ENCODE measurements at regions of chr6 and their contacts with region 1.

Region 1: DNA sequence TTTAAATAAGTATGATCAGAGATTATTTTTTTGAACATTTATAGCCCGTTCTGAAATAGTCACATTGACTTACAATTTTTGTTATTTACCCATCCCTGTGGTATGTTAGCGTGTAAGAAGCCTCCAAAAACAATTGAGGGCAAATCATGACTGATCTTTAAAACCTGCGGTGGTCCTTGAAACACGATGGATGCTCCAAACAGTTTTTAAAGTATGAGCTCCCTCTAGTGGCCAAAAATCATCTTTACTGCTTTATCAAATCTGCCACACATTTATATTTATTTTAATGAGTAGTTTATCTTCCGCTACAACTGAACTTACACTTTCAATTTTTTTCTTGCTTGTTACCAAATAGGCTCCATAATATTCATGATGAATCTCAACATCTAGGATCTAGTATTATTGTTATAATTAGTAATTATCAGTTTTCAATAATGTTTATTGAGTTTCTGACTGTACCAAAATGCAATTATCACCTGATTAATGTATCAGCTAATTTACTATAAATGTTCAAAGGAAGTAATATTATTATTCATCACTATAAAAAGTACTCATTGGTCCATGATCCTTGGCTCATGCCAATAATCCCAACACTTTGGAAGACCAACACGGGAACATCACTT is 52.2 kb downstream of the MARCKS start:
- DNase-seq: peak; percentile 32 to 47
- ATAC-seq: peak in 1 of 2 experiments; percentile 51; a peak in 1 of 6 replicates
- H3K4me3 ChIP-seq: no peak overlapping the region
- H3K27ac ChIP-seq: no peak overlapping the region
- H3K4me1 ChIP-seq: no peaks in the 10 kb centered on the region
- CTCF ChIP-seq: peak; percentile 75
- EP300 ChIP-seq: no peak
- POLR2A ChIP-seq: no peak
- RAD21 ChIP-seq: peak; percentile 72 to 83

Region 2: DNA sequence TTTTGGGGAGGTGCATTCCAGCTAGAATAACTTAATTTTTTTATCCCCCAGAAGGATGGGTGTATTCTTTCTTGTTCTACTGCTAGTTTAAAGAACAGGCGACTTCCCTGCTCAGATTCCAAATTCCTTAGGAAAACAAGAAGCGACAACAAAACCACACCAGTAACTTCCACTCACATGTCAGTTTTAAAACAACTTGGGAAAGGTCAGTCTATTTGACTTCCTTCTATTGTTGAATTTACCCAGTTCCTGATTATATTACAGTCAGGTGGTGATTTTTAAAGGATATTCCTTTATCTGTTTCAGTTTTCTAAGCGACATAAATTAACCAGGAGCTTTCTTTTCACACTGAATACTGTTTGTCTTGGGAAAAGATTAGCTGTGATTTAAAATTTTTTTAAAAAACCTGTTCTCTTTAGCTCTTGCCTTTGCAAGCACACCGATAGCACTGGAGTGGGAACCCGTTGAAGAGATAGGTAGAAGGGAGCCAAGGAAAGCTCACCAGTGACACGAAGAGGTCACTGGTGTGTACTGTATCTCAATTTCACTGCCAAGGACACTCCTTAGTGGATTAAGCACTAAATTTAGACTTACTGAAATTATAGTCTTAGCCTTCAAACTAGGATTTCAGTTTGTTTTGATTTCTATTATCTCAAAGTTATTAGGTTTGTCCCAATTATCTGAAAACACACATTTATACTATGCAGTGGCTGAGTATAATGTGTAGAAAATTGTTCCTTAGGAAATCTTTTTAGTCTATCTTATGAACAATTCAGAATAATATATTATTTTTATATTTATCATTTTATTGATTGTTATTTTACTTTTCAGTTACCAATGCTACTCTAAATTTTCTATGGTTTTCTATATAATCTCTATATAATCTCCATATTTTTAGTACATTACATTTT is 29.9 kb before region 1 on chr6:
- CTCF ChIA-PET with region 1: interaction called, 13 read pairs
- POLR2A ChIA-PET with region 1: no interaction called
- DNase-seq: peak; percentile 48 to 73
- ATAC-seq: peak; percentile 99
- H3K4me3 ChIP-seq: no peak overlapping the region
- H3K27ac ChIP-seq: peak overlapping the region; percentile 39 to 48; a peak in 3 of 6 replicates
- H3K4me1 ChIP-seq: peaks cover 30% of the 10 kb centered on the region; the same call in 2 of the 3 replicates
- CTCF ChIP-seq: peak; percentile 69
- EP300 ChIP-seq: no peak
- POLR2A ChIP-seq: no peak
- RAD21 ChIP-seq: peak; percentile 84

Region 3: DNA sequence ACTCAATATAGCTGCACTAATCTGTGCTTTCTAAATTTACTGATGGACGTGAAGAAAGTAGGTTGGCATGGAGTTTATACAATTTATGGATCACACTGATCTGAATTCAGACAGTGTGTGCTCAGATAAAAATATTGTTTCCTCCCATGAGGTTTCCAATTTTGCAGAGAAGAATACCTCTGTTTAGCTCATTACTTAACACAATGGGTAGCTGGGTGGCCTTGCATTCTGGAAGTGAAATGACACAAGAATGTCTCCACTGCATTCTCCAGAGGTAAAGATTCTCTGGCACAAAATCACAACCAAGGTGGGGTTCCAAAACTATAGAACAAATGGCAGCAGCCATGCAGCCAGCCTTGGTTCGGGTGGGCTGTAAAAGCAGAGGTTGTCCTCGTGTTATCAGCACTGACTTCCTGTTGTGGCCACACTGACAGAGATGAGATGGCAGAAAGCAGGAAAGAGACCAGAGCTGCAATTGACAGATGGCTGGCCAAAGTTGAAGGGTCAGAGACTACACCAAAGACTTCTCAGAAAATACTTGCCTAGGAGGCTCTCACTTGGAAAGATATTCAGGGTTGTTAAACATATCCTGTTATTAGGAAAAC is 11.4 kb after region 1 on chr6:
- CTCF ChIA-PET with region 1: interaction called, 10 read pairs
- POLR2A ChIA-PET with region 1: no interaction called
- DNase-seq: no peak
- ATAC-seq: no peak
- H3K4me3 ChIP-seq: no peak overlapping the region
- H3K27ac ChIP-seq: no peak overlapping the region
- H3K4me1 ChIP-seq: no peaks in the 10 kb centered on the region
- CTCF ChIP-seq: no peak
- EP300 ChIP-seq: no peak
- POLR2A ChIP-seq: no peak
- RAD21 ChIP-seq: no peak

Region 4: DNA sequence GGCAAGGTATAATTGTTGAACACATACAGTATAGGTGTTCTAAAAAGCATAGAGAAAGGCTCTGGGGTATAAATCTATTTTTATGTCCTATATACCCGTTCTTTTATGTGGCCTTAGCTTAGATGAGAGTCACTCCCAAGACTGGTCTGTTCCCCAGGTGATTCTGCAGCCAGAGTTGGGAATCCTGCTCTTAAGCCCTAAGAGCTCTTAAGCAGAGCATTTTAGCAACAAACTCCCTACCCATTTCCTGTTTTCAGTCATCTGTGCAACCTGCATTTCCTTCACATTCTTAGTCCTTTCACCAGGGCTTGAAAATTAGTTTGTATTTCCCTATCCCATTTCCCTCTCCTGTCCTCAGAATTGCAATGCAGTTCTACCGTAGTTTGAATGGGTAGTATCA is 267.4 kb after region 1 on chr6:
- CTCF ChIA-PET with region 1: no interaction called
- POLR2A ChIA-PET with region 1: no interaction called
- DNase-seq: no peak
- ATAC-seq: no peak
- H3K4me3 ChIP-seq: no peak overlapping the region
- H3K27ac ChIP-seq: no peak overlapping the region
- H3K4me1 ChIP-seq: no peaks in the 10 kb centered on the region
- CTCF ChIP-seq: no peak
- EP300 ChIP-seq: no peak
- POLR2A ChIP-seq: no peak
- RAD21 ChIP-seq: no peak